HepG2 (cell line): ENCODE measurements at regions of chr1 and their contacts with region 1.

Region 1: DNA sequence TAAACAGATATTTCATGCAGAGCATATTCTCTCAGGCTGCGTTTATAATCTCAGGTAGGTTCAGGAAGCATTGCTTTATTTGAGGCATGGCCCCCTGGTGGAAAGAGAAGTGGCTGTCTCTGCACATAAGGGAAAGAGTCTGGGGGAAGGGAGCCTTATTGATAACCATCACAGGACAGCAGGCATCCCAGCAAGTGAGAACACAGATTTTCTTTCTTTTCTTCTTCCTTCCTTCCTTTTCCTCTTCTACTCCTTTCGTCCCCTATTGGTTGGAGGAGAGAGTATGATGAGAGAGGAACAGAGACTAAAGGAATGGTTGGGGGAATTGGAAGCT is 21.9 kb downstream of the TSNAX start:
- DNase-seq: peak; percentile 50
- ATAC-seq: peak; percentile 92
- H3K4me3 ChIP-seq: no peak overlapping the region
- H3K27ac ChIP-seq: no peak overlapping the region
- H3K4me1 ChIP-seq: peaks cover 10% of the 10 kb centered on the region
- H3K27me3 ChIP-seq: no peaks in the 10 kb centered on the region
- CTCF ChIP-seq: peak; percentile 59
- EP300 ChIP-seq: no peak
- POLR2A ChIP-seq: no peak
- RAD21 ChIP-seq: peak; percentile 57

Region 2: GRCh38 chr1:231528172-231529029 is 22.0 kb before region 1 on chr1 and contains the start of gene TSNAX:
- CTCF ChIA-PET with region 1: no interaction called
- POLR2A ChIA-PET with region 1: no interaction called
- in situ Hi-C with region 1: no loop called
- intact Hi-C with region 1: loop called (anchors 2 kb)
- DNase-seq: peak; percentile 88
- ATAC-seq: peak; percentile 97
- H3K4me3 ChIP-seq: peak within 1 kb of the TSS; percentile 75 to 86 (median 82)
- H3K27ac ChIP-seq: peak within 1 kb of the TSS; percentile 95
- H3K4me1 ChIP-seq: peaks cover 46% of the 10 kb centered on the region
- H3K27me3 ChIP-seq: no peaks in the 10 kb centered on the region; a peak in 1 of 5 replicates
- CTCF ChIP-seq: no peak
- EP300 ChIP-seq: peak in 1 of 2 experiments; percentile 5; a peak in 1 of 4 replicates
- POLR2A ChIP-seq: peak; percentile 85 to 91
- RAD21 ChIP-seq: no peak
- total RNA-seq, gene TSNAX: 46.2 and 69.1 TPM in 2 replicates

Region 3: DNA sequence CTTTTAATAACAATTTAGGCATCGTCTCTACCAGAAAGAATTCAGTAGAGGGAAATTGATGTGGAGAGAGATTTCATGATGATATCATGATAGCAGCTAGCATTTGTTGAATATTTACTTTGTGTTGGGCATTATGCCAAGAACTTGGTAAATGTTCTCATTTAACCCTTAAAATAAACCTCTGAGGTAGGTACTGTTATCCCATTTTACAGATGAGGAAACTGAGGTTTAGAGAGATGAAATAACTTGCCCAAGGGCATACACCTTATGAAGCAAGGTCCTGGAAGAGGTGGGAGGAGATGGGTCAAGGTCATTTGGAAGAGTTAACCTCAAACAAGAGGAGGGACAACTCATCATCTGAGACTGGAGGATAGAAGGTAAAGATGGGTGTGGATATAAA is 12.8 kb after region 1 on chr1:
- CTCF ChIA-PET with region 1: no interaction called
- POLR2A ChIA-PET with region 1: no interaction called
- in situ Hi-C with region 1: no loop called
- intact Hi-C with region 1: no loop called
- DNase-seq: no peak
- ATAC-seq: no peak
- H3K4me3 ChIP-seq: no peak overlapping the region
- H3K27ac ChIP-seq: no peak overlapping the region
- H3K4me1 ChIP-seq: no peaks in the 10 kb centered on the region
- H3K27me3 ChIP-seq: no peaks in the 10 kb centered on the region
- CTCF ChIP-seq: no peak
- EP300 ChIP-seq: no peak
- POLR2A ChIP-seq: no peak
- RAD21 ChIP-seq: no peak

Region 4: GRCh38 chr1:231636157-231636556 is 85.7 kb after region 1 on chr1:
- CTCF ChIA-PET with region 1: no interaction called
- POLR2A ChIA-PET with region 1: no interaction called
- in situ Hi-C with region 1: no loop called
- intact Hi-C with region 1: no loop called
- DNase-seq: peak; percentile 67
- ATAC-seq: peak; percentile 85
- H3K4me3 ChIP-seq: no peak overlapping the region
- H3K27ac ChIP-seq: no peak overlapping the region
- H3K4me1 ChIP-seq: peaks cover 24% of the 10 kb centered on the region
- H3K27me3 ChIP-seq: no peaks in the 10 kb centered on the region
- CTCF ChIP-seq: no peak
- EP300 ChIP-seq: no peak
- POLR2A ChIP-seq: no peak
- RAD21 ChIP-seq: no peak